Posterior vena cava (tissue), 2 donors: ENCODE measurements at regions of chr1 and their contacts with region 1.

Region 1: GRCh38 chr1:169681140-169681539 is 30.3 kb downstream of the SELL start:
- DNase-seq: no peak

Region 2: GRCh38 chr1:169698976-169699375 is 17.8 kb after region 1 on chr1:
- intact Hi-C with region 1: loop called in 1 of 2 experiments (anchors 1 kb)
- DNase-seq: no peak